Kidney (tissue), 22 donors: ENCODE measurements at regions of chr2 and their contacts with region 1.

Region 1: GRCh38 chr2:10057231-10058107 is 14.1 kb downstream of the KLF11 start:
- DNase-seq: peak; percentile 81 to 96 (median 88)
- H3K4me3 ChIP-seq: peak overlapping the region in 1 of 3 donors; percentile 20
- H3K27ac ChIP-seq: peak overlapping the region; percentile 48 to 59
- H3K4me1 ChIP-seq: peaks cover 0 to 16% (median 7%) of the 10 kb centered on the region in 3 donors
- H3K27me3 ChIP-seq: no peaks in the 10 kb centered on the region
- CTCF ChIP-seq: no peak

Region 2: GRCh38 chr2:9813312-9814133 is 243.9 kb before region 1 on chr2:
- intact Hi-C with region 1: loop called (anchors 10 kb)
- DNase-seq: peak; percentile 73 to 88 (median 84)
- H3K4me3 ChIP-seq: peak overlapping the region in 2 of 3 donors; percentile 11 to 44
- H3K27ac ChIP-seq: no peak overlapping the region
- H3K4me1 ChIP-seq: peaks cover 0 to 4% (median 2%) of the 10 kb centered on the region in 3 donors
- H3K27me3 ChIP-seq: no peaks in the 10 kb centered on the region
- CTCF ChIP-seq: peak; percentile 89

Region 3: DNA sequence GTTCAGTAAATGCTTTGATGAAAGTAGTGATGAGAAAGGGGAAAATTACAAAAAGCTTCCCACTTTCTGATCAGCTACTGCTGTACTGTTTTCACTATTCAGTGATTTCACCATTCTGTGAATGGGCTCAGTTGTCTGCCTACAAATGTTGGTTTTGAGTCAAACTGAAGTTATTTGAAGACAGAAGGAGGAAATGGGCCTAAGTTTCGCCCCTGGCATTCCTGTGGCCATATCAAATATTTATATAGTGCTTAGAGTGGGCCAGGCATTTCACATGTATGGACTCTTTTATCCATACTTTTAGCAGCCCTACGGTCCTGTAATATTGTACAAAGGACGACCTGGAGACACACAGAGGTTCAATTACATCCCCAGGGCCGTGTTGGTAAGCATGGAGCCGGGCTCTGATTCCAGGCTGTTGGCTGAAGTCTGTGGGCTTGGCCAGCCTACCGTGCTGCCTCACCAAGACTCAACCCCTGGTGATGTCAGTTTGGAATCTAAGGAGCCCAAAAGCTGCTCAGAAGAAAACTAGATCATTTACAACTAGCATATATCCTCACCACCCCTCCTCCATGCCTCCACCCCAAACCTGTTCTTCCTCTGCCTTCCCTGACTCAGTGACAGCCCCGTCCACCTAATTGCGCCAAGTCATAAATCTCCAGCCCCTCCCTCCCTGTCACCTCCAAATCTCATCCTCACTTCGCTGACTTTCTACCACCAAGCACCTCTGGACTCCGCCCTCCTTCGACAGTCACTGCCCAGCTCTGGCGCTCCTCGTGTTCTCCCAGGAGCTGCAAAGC is 116.1 kb before region 1 on chr2:
- intact Hi-C with region 1: no loop called
- DNase-seq: peak in 4 of 5 donors; percentile 33 to 79 (median 48)
- H3K4me3 ChIP-seq: no peak overlapping the region
- H3K27ac ChIP-seq: no peak overlapping the region
- H3K4me1 ChIP-seq: no peaks in the 10 kb centered on the region
- H3K27me3 ChIP-seq: no peaks in the 10 kb centered on the region
- CTCF ChIP-seq: no peak

Region 4: GRCh38 chr2:9984217-9984739 is 73.2 kb before region 1 on chr2:
- intact Hi-C with region 1: loop called (anchors 10 kb)
- DNase-seq: peak in 3 of 5 donors; percentile 39 to 63 (median 62)
- H3K4me3 ChIP-seq: no peak overlapping the region
- H3K27ac ChIP-seq: no peak overlapping the region
- H3K4me1 ChIP-seq: peaks cover 0 to 4% (median 0%) of the 10 kb centered on the region in 3 donors
- H3K27me3 ChIP-seq: no peaks in the 10 kb centered on the region
- CTCF ChIP-seq: peak; percentile 68

Region 5: DNA sequence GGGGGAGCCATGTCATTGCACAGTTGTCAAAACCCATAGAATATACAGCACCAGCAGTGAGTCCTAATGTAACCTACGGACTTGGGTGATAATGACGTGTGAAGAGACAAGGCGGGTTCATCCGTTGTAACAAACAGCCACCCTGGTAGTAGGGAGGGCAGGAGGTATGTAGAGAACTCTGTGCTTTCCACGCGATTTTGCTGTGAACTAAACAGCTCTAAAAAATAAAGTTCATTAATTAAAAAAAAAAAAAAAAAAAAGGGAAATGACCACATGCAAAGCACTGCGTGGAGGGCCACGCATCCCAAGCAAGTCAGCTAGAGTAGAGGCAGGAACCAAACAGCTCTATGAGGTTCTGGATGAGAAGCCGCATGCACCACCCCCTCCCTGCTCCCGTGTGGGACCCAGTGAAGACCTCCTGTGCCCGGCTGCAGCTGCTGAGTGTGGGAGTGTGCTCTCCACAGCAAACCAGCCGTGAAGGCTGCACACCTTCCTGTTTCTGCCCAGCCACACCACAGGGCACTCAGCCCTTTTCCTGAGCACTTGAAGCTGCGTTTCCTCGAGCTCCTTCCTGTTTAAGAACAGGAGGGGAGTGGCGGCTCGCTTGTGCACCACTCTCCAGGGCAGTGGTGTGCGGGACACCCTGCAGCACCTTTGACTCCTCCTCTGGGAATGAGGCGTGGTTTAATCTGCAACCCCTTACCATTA is 325.0 kb after region 1 on chr2:
- intact Hi-C with region 1: no loop called
- DNase-seq: peak in 4 of 5 donors; percentile 82 to 84 (median 84)
- H3K4me3 ChIP-seq: no peak overlapping the region
- H3K27ac ChIP-seq: no peak overlapping the region
- H3K4me1 ChIP-seq: peaks cover 0 to 45% (median 23%) of the 10 kb centered on the region in 3 donors
- H3K27me3 ChIP-seq: no peaks in the 10 kb centered on the region
- CTCF ChIP-seq: no peak